ENCODE measurements at regions of chr12 and their contacts with region 1.

Region 1: GRCh38 chr12:54398995-54399793 is 14.7 kb upstream of the ZNF385A start:
- DNase-seq: peak; percentile 92
- ATAC-seq: peak; percentile 83

Region 2: DNA sequence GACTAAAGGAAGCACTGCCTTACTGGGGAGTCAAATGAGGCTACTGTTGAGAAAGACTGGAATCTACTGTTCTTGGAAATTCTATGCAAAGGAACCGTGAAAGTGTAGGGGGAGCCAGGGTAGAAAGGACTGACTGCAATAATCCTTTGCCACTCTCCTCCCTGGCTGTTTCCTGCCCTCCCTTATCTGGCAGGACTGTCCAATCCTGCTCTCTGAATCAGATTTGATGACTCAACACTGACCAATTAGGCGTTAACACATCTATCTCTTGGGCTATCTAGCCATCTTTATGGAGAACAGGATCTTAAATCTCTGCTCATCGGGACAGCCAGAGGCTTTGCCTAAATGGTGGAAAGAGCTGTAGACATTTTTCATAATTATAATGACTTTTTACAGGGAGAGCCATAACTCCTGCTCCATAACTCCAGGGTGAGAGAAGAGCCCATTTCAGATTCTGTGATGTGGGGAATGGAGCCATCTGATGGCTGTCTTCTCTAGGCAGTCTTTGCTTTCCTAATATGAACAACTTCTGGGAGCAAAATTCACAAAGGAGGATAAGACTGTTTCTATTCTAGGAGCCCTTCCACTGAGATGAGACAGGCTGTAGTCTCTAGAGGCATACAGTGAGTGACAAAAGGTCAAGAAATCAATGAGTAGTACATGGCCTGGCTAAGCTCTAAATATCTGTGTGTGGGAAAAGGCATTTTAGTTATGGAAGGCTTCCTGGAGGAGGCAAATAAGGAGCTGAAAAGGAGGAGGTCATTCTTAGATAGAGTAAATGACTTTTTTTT is 578.5 kb before region 1 on chr12:
- intact Hi-C with region 1: no loop called
- DNase-seq: no peak
- ATAC-seq: peak; percentile 49

Region 3: DNA sequence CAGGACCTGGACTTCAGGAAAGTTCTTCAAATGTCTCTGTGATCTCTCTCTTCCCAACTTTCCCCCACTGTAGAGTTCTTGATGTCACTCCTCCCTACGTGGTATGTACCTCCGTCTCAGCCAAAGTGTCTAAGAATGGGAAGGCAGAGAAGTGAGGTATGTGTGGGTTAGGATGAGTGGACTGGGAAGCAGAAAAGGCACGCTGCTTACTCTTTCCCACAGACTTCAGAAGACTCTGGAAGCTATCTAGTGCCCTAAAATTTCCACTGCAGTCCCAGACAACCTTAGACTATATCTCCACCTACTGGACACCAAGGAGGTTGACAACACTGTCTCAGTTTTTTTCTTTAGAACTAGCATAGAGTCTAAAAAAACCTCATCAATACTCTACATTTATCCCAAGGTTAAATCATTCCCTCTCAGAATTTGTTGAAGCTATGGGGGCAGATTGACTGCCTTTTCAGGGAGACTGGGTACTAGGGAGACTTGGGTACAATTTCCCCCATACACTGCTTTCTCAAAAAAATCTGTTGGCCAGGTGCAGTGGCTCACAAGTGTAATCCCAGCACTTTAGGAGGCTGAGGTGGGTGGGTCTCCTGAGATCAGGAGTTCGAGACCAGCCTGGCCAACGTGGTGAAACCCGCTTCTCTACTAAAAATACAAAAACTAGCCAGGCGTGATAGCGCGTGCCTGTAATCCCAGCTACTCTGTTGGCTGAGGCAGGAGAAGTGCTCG is 40.5 kb after region 1 on chr12:
- intact Hi-C with region 1: loop called (anchors 1 kb)
- DNase-seq: no peak
- ATAC-seq: peak; percentile 93

Measured in left ventricle myocardium superior (tissue), 1 donor.